RWPE1 (cell line): ENCODE measurements at regions of chr6 and their contacts with region 1.

Region 1: GRCh38 chr6:85602100-85602499 is 8.4 kb upstream of the SNX14 start:
- DNase-seq: no peak
- H3K27ac ChIP-seq: no peak overlapping the region
- CTCF ChIP-seq: no peak

Region 2: GRCh38 chr6:85620308-85620707 is 18.2 kb after region 1 on chr6:
- CTCF ChIA-PET with region 1: interaction called, 3 read pairs
- POLR2A ChIA-PET with region 1: interaction called, 13 read pairs
- DNase-seq: no peak
- H3K27ac ChIP-seq: no peak overlapping the region
- CTCF ChIP-seq: no peak

Region 3: GRCh38 chr6:85678602-85679444 is 76.7 kb after region 1 on chr6:
- CTCF ChIA-PET with region 1: no interaction called
- POLR2A ChIA-PET with region 1: no interaction called
- DNase-seq: peak; percentile 95
- H3K27ac ChIP-seq: peak overlapping the region; percentile 99
- CTCF ChIP-seq: no peak